ENCODE measurements at regions of chr17 and their contacts with region 1.

Region 1: GRCh38 chr17:41548844-41549595 is 20.9 kb upstream of the KRT19 start:
- DNase-seq: peak; percentile 80 to 95
- H3K4me3 ChIP-seq: peak overlapping the region in 3 of 4 experiments; percentile 13 to 43 (median 16); a peak in 4 of 8 replicates
- H3K27ac ChIP-seq: peak overlapping the region; percentile 64; the same call in 1 of the 2 replicates
- H3K4me1 ChIP-seq: peaks cover 8 to 24% (median 13%) of the 10 kb centered on the region in 4 experiments
- H3K27me3 ChIP-seq: no peaks in the 10 kb centered on the region; a peak in 2 of 7 replicates
- CTCF ChIP-seq: peak; percentile 87 to 97 (median 96)
- EP300 ChIP-seq: peak in 1 of 2 experiments; percentile 51; a peak in 1 of 3 replicates
- POLR2A ChIP-seq: peak in 1 of 2 experiments; percentile 63; a peak in 1 of 3 replicates
- RAD21 ChIP-seq: peak; percentile 91 to 96

Region 2: GRCh38 chr17:41254861-41255260 is 294.2 kb before region 1 on chr17:
- CTCF ChIA-PET with region 1: no interaction called
- POLR2A ChIA-PET with region 1: no interaction called
- DNase-seq: no peak
- H3K4me3 ChIP-seq: no peak overlapping the region
- H3K27ac ChIP-seq: no peak overlapping the region
- H3K4me1 ChIP-seq: peaks cover 0 to 2% (median 0%) of the 10 kb centered on the region in 4 experiments; a peak in 2 of 7 replicates
- H3K27me3 ChIP-seq: no peaks in the 10 kb centered on the region; a peak in 1 of 7 replicates
- CTCF ChIP-seq: no peak
- EP300 ChIP-seq: no peak
- POLR2A ChIP-seq: no peak
- RAD21 ChIP-seq: no peak

Region 3: GRCh38 chr17:41329281-41329948 is 219.6 kb before region 1 on chr17:
- CTCF ChIA-PET with region 1: interaction called, 24 read pairs
- POLR2A ChIA-PET with region 1: no interaction called
- DNase-seq: peak; percentile 27 to 78
- H3K4me3 ChIP-seq: no peak overlapping the region
- H3K27ac ChIP-seq: no peak overlapping the region
- H3K4me1 ChIP-seq: no peaks in the 10 kb centered on the region; a peak in 1 of 7 replicates
- H3K27me3 ChIP-seq: no peaks in the 10 kb centered on the region
- CTCF ChIP-seq: peak; percentile 86 to 97 (median 95)
- EP300 ChIP-seq: no peak
- POLR2A ChIP-seq: no peak
- RAD21 ChIP-seq: peak; percentile 83 to 88

Region 4: DNA sequence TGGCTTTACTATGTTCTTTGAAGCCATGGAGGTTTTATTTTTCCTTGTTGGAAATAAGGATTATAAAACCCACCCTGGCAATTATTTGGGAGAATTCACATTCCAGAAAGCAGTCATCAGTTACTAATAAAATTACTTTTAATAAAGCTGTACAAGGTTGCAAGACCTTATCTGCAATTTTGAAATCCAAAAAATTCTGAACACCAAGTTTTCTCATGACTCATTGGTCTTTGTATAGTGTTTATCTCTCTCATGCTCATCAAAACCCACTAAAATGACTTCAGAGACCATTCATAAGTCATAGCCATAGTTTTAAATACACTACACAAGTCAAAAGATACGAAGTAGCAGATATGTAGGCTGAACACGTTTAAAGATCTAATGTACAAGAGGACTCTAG is 102.2 kb before region 1 on chr17:
- CTCF ChIA-PET with region 1: interaction called, 10 read pairs
- POLR2A ChIA-PET with region 1: no interaction called
- DNase-seq: no peak
- H3K4me3 ChIP-seq: no peak overlapping the region
- H3K27ac ChIP-seq: no peak overlapping the region
- H3K4me1 ChIP-seq: no peaks in the 10 kb centered on the region; a peak in 1 of 7 replicates
- H3K27me3 ChIP-seq: no peaks in the 10 kb centered on the region; a peak in 1 of 7 replicates
- CTCF ChIP-seq: no peak
- EP300 ChIP-seq: no peak
- POLR2A ChIP-seq: no peak
- RAD21 ChIP-seq: no peak

Region 5: DNA sequence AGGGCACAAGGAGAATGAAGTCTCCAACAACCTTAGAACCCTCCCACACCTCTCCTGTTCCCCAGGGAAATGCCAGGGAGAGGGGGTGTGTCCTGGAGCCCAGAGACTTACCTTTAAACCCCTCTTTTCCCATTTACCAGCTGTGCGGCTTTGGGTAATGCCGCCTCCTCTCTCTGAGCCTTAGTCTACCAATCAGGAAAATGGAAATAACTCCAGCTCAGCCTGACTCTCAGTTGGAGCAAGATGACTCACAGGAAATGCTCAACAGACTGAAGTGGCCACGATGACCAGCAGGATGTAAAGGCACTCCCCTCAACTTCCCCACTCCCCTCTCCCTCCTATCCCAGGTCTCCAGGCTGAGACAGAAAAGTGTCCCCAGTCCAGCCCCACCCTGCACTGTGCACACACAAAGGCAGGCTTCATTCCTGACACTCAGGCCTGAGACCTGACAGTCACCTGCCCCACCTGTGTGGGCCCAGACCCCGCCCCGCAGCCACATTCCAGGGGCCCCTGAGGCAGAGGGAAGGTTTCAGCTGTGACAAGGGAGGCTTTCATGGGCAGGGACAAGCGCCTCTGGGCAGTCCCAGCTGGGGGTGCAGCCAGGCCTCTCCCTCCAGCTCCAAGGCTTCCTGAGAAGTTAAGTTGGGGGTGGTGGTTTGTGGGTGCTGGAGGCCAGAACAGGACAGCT is 27.3 kb before region 1 on chr17:
- CTCF ChIA-PET with region 1: interaction called, 79 read pairs
- POLR2A ChIA-PET with region 1: interaction called, 293 read pairs
- DNase-seq: no peak
- H3K4me3 ChIP-seq: no peak overlapping the region
- H3K27ac ChIP-seq: no peak overlapping the region
- H3K4me1 ChIP-seq: peaks cover 0 to 18% (median 11%) of the 10 kb centered on the region in 4 experiments; a peak in 6 of 7 replicates
- H3K27me3 ChIP-seq: no peaks in the 10 kb centered on the region
- CTCF ChIP-seq: no peak
- EP300 ChIP-seq: no peak
- POLR2A ChIP-seq: no peak
- RAD21 ChIP-seq: no peak

Region 6: DNA sequence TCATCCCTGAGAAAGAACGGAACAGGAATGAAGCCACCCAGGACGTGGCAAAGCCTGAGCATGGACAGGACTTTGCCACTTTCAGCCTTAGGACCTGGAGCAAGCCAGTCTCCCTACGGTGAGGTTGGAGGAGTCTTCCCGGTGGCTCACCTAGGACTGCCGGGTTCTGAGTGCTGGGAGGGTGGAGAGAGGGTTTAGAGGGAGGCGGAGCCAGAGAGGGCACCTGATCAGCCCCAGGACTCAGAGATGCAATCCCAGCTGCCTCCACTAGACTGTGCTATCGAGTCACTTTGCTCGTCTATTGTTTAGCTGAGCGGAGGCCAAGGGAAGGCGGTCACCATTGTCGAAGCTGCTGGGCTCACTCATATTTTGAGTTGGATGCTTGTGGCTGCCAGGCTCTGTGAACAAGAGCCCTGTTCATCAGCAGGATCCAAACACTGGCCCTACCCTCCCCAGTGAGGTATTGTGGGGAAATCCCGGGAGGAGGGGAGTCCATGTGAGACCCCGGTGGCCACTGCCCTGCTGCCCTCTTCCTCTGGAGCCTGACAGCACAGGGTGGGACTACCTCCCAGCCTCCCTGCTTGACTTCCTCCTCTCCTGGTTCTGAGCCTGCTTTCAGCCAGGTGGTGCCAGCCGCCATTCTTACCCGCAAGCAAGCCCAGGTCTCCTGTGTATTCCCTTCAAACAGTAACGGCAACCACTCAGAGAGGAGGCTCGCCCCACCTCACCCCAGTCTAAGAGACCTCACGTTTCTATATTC is 30.6 kb after region 1 on chr17:
- CTCF ChIA-PET with region 1: interaction called, 46 read pairs
- POLR2A ChIA-PET with region 1: interaction called, 5 read pairs
- DNase-seq: peak; percentile 78 to 98
- H3K4me3 ChIP-seq: no peak overlapping the region
- H3K27ac ChIP-seq: no peak overlapping the region
- H3K4me1 ChIP-seq: peaks cover 0 to 4% (median 2%) of the 10 kb centered on the region in 4 experiments; a peak in 3 of 7 replicates
- H3K27me3 ChIP-seq: peaks cover 0 to 2% (median 0%) of the 10 kb centered on the region in 4 experiments; a peak in 1 of 7 replicates
- CTCF ChIP-seq: peak; percentile 85 to 99 (median 88)
- EP300 ChIP-seq: no peak
- POLR2A ChIP-seq: peak in 1 of 2 experiments; percentile 75; a peak in 2 of 3 replicates
- RAD21 ChIP-seq: peak; percentile 63 to 76

Region 7: GRCh38 chr17:41648411-41649195 is 99.6 kb after region 1 on chr17:
- CTCF ChIA-PET with region 1: interaction called, 492 read pairs
- POLR2A ChIA-PET with region 1: interaction called, 14 read pairs
- DNase-seq: peak; percentile 74 to 96
- H3K4me3 ChIP-seq: peak overlapping the region; percentile 26 to 61 (median 44); a peak in 7 of 8 replicates
- H3K27ac ChIP-seq: no peak overlapping the region
- H3K4me1 ChIP-seq: peaks cover 0 to 6% (median 2%) of the 10 kb centered on the region in 4 experiments; a peak in 4 of 7 replicates
- H3K27me3 ChIP-seq: no peaks in the 10 kb centered on the region; a peak in 2 of 7 replicates
- CTCF ChIP-seq: peak; percentile 91 to 97 (median 96)
- EP300 ChIP-seq: no peak
- POLR2A ChIP-seq: no peak
- RAD21 ChIP-seq: peak; percentile 64 to 74

Measured in H1 (cell line).